ENCODE measurements at regions of chr17 and their contacts with region 1.

Region 1: DNA sequence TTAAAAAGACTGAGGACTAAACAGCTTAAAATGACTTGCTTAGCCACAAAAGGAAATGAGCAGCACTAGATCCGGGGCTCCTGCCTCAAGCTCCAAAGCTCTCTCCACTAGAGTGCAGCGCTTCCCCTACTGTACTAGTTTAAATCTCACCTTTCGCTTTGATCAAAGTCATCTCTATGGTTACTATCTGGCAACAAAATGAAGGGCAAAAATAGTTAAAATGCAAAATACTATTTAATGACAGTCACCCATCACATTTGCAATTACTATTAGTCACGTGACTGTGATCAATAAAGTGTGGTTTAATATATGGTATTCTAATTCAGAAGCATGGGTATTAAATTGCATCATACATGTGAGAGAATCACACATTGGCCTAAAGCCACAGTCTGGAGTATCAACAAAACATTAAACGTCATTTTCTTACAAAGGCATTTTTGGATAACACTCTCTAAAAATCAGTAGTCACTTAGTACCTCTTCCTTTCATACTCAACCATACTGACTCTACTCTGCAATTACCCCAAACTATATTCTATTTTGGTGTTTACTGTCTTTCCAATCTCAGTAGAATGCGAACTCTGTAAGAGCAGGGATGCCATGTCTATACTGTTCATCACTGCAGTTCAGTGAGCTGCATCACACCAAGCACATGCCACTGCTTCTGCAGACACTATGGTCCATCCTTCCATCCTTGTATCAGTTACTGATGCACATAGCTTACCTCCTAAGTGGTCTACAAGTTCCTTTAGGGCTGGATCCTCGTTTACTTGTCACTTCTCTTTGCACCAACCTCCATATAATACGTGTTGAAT is 6.2 kb downstream of the PSMD12 start:
- DNase-seq: peak; percentile 46
- H3K4me3 Mint-ChIP-seq: peak overlapping the region; percentile 46
- H3K27ac Mint-ChIP-seq: peak overlapping the region; percentile 73
- H3K4me1 Mint-ChIP-seq: peaks cover 62% of the 10 kb centered on the region
- H3K27me3 Mint-ChIP-seq: no peaks in the 10 kb centered on the region

Region 2: GRCh38 chr17:67272312-67273050 is 87.7 kb before region 1 on chr17:
- intact Hi-C with region 1: no loop called
- DNase-seq: no peak
- H3K4me3 Mint-ChIP-seq: no peak overlapping the region
- H3K27ac Mint-ChIP-seq: no peak overlapping the region
- H3K4me1 Mint-ChIP-seq: no peaks in the 10 kb centered on the region
- H3K27me3 Mint-ChIP-seq: peaks cover 5% of the 10 kb centered on the region

Region 3: GRCh38 chr17:67349420-67349819 is 10.7 kb before region 1 on chr17:
- intact Hi-C with region 1: loop called (anchors 1 kb)
- DNase-seq: no peak
- H3K4me3 Mint-ChIP-seq: no peak overlapping the region
- H3K27ac Mint-ChIP-seq: no peak overlapping the region
- H3K4me1 Mint-ChIP-seq: peaks cover 4% of the 10 kb centered on the region
- H3K27me3 Mint-ChIP-seq: no peaks in the 10 kb centered on the region

Measured in activated T-helper 1 cell treated with anti-CD3 and anti-CD28 coated beads, Interleukin-12 subunit alpha, Interleukin-12 subunit beta, Interleukin-2, Interleukin-4 antibody, amounts not matched to agents 30 ng/mL and 10 ng/mL and 1 ng/mL, durations not matched to agents 14 hours and 24 hours and 36 hours (primary cell).